CD4-positive, alpha-beta memory T cell (primary cell): ENCODE measurements at regions of chr10 and their contacts with region 1.

Region 1: DNA sequence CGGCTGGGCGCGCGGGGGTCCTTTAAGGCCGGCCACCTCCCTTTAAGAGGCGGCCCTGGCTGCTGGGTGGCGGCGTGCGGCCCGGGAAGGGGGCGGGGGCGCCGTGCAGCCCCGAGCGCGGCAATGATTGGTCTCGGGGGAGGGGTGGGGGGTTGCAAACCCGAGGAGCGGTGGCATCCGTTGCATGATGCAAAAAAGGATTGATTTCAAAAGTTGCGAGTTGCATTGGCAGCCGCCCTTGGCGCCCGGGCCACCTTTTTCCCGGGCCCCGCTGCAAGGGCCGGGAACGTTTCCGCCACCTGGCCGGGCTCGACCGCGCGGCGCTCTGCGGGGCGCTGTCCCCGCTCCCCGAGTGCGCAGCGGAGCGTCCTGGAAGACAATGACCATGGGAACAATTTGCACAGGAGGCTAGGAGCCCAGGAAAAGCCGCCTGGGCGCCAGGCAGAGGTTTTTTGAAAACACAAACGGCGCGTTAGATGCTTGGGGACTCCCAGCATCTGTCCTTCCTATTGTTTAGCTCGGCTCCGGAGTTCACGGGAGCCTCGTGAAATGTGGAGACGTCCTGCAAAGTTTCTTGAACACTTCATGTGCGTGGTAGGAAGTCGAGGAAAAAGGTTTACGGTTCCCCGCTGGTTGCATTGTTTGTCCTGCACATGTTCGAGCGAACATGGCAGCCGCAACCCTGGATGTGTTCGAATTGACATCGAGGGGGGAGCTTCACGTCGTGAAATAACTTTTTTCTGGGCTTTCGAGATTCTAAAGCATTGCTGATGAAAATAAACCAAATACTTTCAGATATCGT is at the start of gene SEPHS1:
- DNase-seq: peak; percentile 79 to 87 (median 80)
- H3K4me3 ChIP-seq: peak within 1 kb of the TSS; percentile 89 to 93
- H3K4me3 Mint-ChIP-seq: peak within 1 kb of the TSS; percentile 94 to 97 (median 96)
- H3K27ac ChIP-seq: peak within 1 kb of the TSS; percentile 75
- H3K27ac Mint-ChIP-seq: peak within 1 kb of the TSS; percentile 88 to 97 (median 96)
- H3K4me1 ChIP-seq: peaks cover 50% of the 10 kb centered on the region
- H3K4me1 Mint-ChIP-seq: peaks cover 33 to 76% (median 51%) of the 10 kb centered on the region in 4 donors
- H3K27me3 ChIP-seq: no peaks in the 10 kb centered on the region
- H3K27me3 Mint-ChIP-seq: no peaks in the 10 kb centered on the region
- total RNA-seq, gene SEPHS1: 27.2 to 30.6 TPM

Region 2: DNA sequence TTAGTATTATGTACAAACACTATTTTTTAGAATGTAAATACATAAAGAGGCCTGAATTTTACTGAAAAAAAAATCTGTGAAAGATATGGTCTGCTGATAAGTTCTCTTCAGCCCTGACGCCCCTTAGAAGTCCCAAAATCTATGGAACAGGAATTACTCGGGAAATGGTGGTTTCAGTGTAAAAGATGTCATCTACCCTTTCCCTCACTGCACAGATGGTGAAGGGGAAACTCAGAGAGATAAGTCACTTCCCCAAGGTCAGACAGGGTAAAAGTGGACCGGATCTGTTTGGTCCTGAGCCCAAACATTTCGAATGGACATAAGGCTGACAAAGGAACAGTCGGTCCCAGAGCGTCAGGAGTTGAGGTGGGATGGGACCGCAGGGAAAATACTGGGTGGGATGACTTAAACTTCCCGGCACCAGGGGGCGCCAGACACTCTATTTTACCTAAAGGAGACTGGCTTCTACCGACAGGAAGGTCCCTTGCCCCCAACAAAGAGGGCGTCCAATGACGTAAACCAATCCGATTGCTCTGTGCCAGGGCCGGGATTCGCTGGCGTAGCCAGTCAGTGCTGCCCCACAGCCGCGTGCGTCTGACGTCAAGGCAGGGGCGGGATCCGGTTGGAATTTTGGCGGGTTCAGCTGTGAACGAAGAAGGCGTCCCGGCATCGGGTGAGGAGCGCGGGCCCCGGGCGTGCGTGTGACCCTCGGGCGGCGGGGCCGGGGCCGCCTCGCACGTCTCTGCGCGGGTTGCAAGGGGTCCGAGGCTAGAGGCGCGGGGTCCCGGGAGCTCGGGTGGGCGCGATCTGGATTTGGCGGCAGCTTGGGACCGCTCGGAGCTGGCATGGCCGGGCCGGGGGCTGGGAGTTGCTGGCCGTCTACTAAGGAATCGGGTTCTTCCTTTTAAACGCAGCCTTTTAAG is 187.2 kb before region 1 on chr10 and contains the start of gene MCM10:
- CTCF ChIA-PET with region 1: interaction called, 7 read pairs
- POLR2A ChIA-PET with region 1: interaction called, 9 read pairs
- intact Hi-C with region 1: loop called (anchors 1 kb)
- DNase-seq: peak; percentile 95 to 99 (median 97)
- H3K4me3 ChIP-seq: peak within 1 kb of the TSS; percentile 50 to 58
- H3K4me3 Mint-ChIP-seq: peak within 1 kb of the TSS; percentile 82 to 94 (median 88)
- H3K27ac ChIP-seq: peak within 1 kb of the TSS; percentile 33
- H3K27ac Mint-ChIP-seq: peak within 1 kb of the TSS; percentile 82 to 94 (median 88)
- H3K4me1 ChIP-seq: peaks cover 15% of the 10 kb centered on the region
- H3K4me1 Mint-ChIP-seq: peaks cover 15 to 36% (median 23%) of the 10 kb centered on the region in 4 donors
- H3K27me3 ChIP-seq: no peaks in the 10 kb centered on the region
- H3K27me3 Mint-ChIP-seq: no peaks in the 10 kb centered on the region
- total RNA-seq, gene MCM10: 0.17 TPM in 1 of 2 experiments, not detected in the other

Region 3: GRCh38 chr10:13271552-13272163 is 76.8 kb before region 1 on chr10:
- CTCF ChIA-PET with region 1: interaction called, 3 read pairs
- POLR2A ChIA-PET with region 1: no interaction called
- intact Hi-C with region 1: loop called (anchors 1 kb)
- DNase-seq: peak; percentile 41 to 54 (median 49)
- H3K4me3 ChIP-seq: no peak overlapping the region
- H3K4me3 Mint-ChIP-seq: peak overlapping the region in 3 of 8 donors; percentile 17 to 18 (median 17)
- H3K27ac ChIP-seq: no peak overlapping the region
- H3K27ac Mint-ChIP-seq: peak overlapping the region in 4 of 7 donors; percentile 37 to 81 (median 72)
- H3K4me1 ChIP-seq: peaks cover 8% of the 10 kb centered on the region
- H3K4me1 Mint-ChIP-seq: peaks cover 0 to 6% (median 4%) of the 10 kb centered on the region in 4 donors
- H3K27me3 ChIP-seq: no peaks in the 10 kb centered on the region
- H3K27me3 Mint-ChIP-seq: peaks cover 0 to 2% of the 10 kb centered on the region in 2 donors

Region 4: DNA sequence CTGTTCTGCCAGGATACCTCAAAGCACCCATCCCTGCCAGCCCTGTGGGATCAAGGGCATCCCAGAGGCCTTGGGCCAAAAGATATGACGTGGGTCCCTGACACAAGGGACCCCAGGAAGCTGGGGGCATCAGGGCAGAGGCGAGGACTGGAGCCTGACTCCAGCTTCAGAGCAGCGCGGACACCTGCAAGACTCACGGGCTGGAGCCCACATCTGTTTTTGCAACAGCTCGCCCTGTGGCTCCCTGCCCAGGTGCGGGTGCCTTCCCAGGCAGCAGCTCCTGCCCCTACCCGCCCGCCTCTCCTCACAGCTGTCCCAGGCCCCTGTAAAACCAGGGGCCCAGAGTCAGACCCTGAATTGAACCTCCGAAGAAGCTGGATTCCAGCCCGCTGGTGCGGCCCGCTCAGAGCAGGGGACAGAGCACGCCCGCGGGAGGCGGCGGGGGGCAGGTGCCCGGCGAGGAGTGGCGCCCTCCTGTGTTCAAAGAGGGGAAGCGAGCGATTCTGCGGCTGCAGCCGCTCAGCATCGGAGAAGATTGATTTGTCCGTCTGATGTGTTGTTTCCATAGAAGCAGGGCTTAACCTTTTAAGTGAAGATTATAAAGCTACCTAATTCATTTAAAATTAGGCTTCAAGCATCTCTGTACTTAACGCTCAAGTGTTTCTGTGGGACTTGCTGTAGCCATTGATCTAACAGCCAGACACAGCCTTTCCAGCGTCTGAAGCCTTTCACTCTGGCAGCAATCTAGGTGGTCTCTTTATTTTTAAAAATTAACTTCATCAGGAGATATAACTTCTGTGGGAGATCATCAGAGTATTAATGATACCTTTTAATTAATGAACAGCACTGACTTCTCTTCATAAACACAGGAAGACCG is 92.0 kb after region 1 on chr10:
- CTCF ChIA-PET with region 1: interaction called, 7 read pairs
- POLR2A ChIA-PET with region 1: interaction called, 4 read pairs
- intact Hi-C with region 1: loop called (anchors 1 kb)
- DNase-seq: peak; percentile 50 to 65 (median 62)
- H3K4me3 ChIP-seq: peak overlapping the region in 1 of 2 donors; percentile 38
- H3K4me3 Mint-ChIP-seq: peak overlapping the region; percentile 27 to 90 (median 74)
- H3K27ac ChIP-seq: no peak overlapping the region
- H3K27ac Mint-ChIP-seq: peak overlapping the region in 2 of 7 donors; percentile 31 to 78
- H3K4me1 ChIP-seq: peaks cover 15% of the 10 kb centered on the region
- H3K4me1 Mint-ChIP-seq: peaks cover 8 to 13% (median 10%) of the 10 kb centered on the region in 4 donors
- H3K27me3 ChIP-seq: peaks cover 30% of the 10 kb centered on the region
- H3K27me3 Mint-ChIP-seq: peaks cover 40 to 42% of the 10 kb centered on the region in 2 donors